Endothelial cell of umbilical vein (primary cell): ENCODE measurements at regions of chr1 and their contacts with region 1.

Region 1: GRCh38 chr1:40774266-40774998 is 9.2 kb upstream of the KCNQ4 start:
- DNase-seq: peak; percentile 37
- H3K4me3 ChIP-seq: no peak overlapping the region
- H3K27ac ChIP-seq: no peak overlapping the region
- H3K4me1 ChIP-seq: no peaks in the 10 kb centered on the region
- H3K27me3 ChIP-seq: no peaks in the 10 kb centered on the region
- CTCF ChIP-seq: peak; percentile 72 to 85
- POLR2A ChIP-seq: no peak

Region 2: GRCh38 chr1:40553017-40553416 is 221.4 kb before region 1 on chr1:
- CTCF ChIA-PET with region 1: no interaction called
- POLR2A ChIA-PET with region 1: no interaction called
- dilution Hi-C with region 1: no loop called
- intact Hi-C with region 1: no loop called
- DNase-seq: no peak
- H3K4me3 ChIP-seq: no peak overlapping the region
- H3K27ac ChIP-seq: no peak overlapping the region
- H3K4me1 ChIP-seq: no peaks in the 10 kb centered on the region
- H3K27me3 ChIP-seq: no peaks in the 10 kb centered on the region
- CTCF ChIP-seq: no peak
- POLR2A ChIP-seq: no peak

Region 3: GRCh38 chr1:40691538-40692428 is 82.6 kb before region 1 on chr1 and contains the start of gene NFYC:
- CTCF ChIA-PET with region 1: interaction called, 18 read pairs
- POLR2A ChIA-PET with region 1: no interaction called
- dilution Hi-C with region 1: no loop called
- intact Hi-C with region 1: loop called (anchors 5 kb)
- DNase-seq: peak; percentile 98
- H3K4me3 ChIP-seq: peak within 1 kb of the TSS; percentile 37 to 95 (median 78)
- H3K27ac ChIP-seq: peak within 1 kb of the TSS; percentile 68
- H3K4me1 ChIP-seq: peaks cover 19% of the 10 kb centered on the region
- H3K27me3 ChIP-seq: no peaks in the 10 kb centered on the region
- CTCF ChIP-seq: no peak
- POLR2A ChIP-seq: peak; percentile 76
- total RNA-seq, gene NFYC: 44.0 and 51.1 TPM in 2 replicates

Region 4: GRCh38 chr1:40736085-40736531 is 38.3 kb before region 1 on chr1:
- CTCF ChIA-PET with region 1: no interaction called
- POLR2A ChIA-PET with region 1: no interaction called
- dilution Hi-C with region 1: no loop called
- intact Hi-C with region 1: no loop called
- DNase-seq: peak; percentile 84
- H3K4me3 ChIP-seq: no peak overlapping the region
- H3K27ac ChIP-seq: peak overlapping the region; percentile 70
- H3K4me1 ChIP-seq: peaks cover 4% of the 10 kb centered on the region
- H3K27me3 ChIP-seq: no peaks in the 10 kb centered on the region
- CTCF ChIP-seq: no peak
- POLR2A ChIP-seq: no peak

Region 5: DNA sequence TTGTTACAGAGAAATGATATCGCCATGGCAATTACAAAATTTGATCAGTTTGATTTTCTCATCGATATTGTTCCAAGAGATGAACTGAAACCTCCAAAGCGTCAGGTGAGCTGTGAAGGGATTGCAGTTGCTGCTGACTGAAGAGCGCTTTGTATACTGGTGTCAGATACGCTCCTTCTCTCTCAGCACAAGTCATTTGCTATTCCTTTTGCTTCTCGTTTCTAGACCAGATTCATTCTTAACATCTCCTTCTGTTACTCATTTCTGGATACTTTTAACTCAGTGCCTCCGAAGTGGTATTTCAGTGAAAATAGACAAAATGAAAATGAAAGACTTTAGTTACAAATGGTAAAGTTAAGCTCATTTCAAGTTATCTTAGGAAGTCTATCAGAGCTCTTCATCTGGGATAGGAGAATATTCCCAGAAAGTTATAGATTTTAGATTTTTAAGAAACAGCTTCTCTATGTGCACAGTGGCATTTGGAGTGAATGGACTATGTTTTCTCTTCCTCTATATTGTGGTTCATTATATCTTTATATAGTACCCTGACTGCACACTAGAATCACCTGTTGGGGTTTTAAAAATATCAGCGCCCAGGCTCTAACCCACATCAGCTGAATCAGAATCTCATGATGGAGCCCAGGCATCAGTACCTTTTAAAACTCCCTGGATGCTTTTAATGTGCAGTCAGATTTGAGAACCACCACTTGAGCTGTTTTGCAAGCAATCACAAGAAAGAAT is 21.1 kb before region 1 on chr1:
- CTCF ChIA-PET with region 1: interaction called, 13 read pairs
- POLR2A ChIA-PET with region 1: no interaction called
- dilution Hi-C with region 1: no loop called
- intact Hi-C with region 1: no loop called
- DNase-seq: no peak
- H3K4me3 ChIP-seq: no peak overlapping the region
- H3K27ac ChIP-seq: no peak overlapping the region
- H3K4me1 ChIP-seq: no peaks in the 10 kb centered on the region
- H3K27me3 ChIP-seq: no peaks in the 10 kb centered on the region
- CTCF ChIP-seq: no peak
- POLR2A ChIP-seq: no peak

Region 6: GRCh38 chr1:40789675-40790430 is 15.4 kb after region 1 on chr1:
- CTCF ChIA-PET with region 1: interaction called, 17 read pairs
- POLR2A ChIA-PET with region 1: no interaction called
- dilution Hi-C with region 1: no loop called
- intact Hi-C with region 1: no loop called
- DNase-seq: no peak
- H3K4me3 ChIP-seq: no peak overlapping the region
- H3K27ac ChIP-seq: no peak overlapping the region
- H3K4me1 ChIP-seq: no peaks in the 10 kb centered on the region
- H3K27me3 ChIP-seq: peaks cover 0 to 22% of the 10 kb centered on the region in 2 experiments
- CTCF ChIP-seq: no peak
- POLR2A ChIP-seq: no peak

Region 7: DNA sequence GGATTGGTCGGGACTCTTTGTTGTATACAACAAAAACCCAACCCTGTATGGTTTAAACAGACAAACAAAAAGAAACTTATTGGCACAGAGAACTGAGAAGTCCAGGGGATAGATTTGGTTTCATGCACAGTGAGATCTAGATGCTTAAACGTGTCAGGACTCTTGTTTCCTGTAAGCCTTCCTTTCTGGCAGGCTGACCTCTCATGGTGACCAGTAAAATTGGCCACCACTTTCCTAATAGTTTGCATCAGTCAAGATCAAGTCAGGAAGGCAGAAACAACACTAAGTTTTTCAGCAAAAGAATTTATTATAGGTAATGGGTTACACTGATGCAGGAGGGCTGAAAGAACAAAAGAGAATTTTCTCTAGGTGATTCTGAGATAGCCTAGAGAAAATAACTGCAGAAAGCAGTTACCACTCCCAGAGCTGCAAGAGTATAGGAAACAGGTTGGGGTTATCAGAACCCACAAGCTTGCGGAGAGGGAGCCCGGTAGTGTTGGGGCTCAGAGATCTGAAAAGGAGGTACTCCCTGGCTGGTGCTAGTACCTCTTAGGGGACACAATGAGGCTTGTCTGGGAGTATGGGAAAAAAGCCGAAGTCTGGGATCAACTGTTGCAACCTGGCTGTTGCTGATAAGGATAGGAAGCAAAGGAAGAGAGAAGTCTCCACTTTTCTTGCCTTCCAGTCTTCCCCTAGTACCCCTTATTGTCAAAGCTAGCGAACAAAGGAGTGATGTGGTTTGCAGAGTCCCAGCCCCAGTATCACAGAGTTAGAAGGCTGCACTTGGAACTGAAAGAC is 66.3 kb after region 1 on chr1:
- CTCF ChIA-PET with region 1: interaction called, 13 read pairs
- POLR2A ChIA-PET with region 1: no interaction called
- dilution Hi-C with region 1: no loop called
- intact Hi-C with region 1: loop called (anchors 2 kb)
- DNase-seq: peak; percentile 22
- H3K4me3 ChIP-seq: no peak overlapping the region
- H3K27ac ChIP-seq: no peak overlapping the region
- H3K4me1 ChIP-seq: peaks cover 10% of the 10 kb centered on the region
- H3K27me3 ChIP-seq: peaks cover 24 to 29% of the 10 kb centered on the region in 2 experiments
- CTCF ChIP-seq: peak in 1 of 2 donors; percentile 1
- POLR2A ChIP-seq: no peak

Region 8: DNA sequence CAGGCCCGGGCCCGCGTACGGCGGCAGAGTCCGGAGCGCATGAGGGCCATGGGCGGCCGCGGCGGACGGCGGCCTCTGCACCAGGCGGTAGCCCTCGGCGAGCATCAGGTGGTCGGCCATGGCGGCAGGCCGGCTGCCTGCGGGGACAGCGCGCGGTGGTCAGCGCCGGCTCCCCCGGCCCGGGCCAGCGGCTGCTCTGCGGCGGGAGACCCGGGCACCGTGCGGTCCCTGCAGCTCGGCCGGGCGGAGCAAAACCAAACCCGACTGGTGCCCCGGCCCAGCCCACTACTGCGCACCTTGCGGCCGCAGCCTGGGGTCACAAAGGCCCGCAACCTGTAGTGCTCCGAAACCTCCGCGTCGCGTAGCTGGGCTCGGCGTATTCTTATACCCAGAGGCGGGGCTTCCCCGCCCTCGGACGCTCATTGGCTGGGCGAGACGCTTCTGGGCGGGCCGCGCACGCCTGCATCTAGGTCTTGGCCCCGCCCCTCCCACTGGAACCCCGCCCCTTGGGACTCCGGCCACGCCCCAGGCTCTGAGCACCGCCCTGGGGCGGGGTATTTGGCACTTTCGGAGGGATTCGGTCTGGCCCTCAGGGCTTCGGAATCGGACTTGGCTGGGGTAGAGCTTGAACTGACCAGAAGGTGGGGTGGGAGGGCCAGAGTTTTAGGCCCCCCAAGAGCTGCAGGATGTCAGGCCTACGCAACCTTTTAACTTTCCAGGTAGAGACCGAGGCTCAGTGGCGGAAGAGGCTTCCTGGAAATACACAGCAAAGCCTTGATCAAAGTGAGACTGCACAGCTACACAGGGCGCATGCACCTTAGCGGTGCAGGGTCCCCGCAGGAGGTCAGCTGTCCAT is 87.8 kb after region 1 on chr1 and contains the start of gene CITED4:
- CTCF ChIA-PET with region 1: interaction called, 10 read pairs
- POLR2A ChIA-PET with region 1: no interaction called
- dilution Hi-C with region 1: no loop called
- intact Hi-C with region 1: no loop called
- DNase-seq: peak; percentile 94
- H3K4me3 ChIP-seq: peak within 1 kb of the TSS; percentile 39 to 52 (median 47)
- H3K27ac ChIP-seq: peak within 1 kb of the TSS; percentile 4
- H3K4me1 ChIP-seq: peaks cover 10% of the 10 kb centered on the region
- H3K27me3 ChIP-seq: no peaks in the 10 kb centered on the region
- CTCF ChIP-seq: no peak
- POLR2A ChIP-seq: peak; percentile 94
- total RNA-seq, gene CITED4: 10.9 and 11.3 TPM in 2 replicates